PC-3 (cell line): ENCODE measurements at regions of chr4 and their contacts with region 1.

Region 1: DNA sequence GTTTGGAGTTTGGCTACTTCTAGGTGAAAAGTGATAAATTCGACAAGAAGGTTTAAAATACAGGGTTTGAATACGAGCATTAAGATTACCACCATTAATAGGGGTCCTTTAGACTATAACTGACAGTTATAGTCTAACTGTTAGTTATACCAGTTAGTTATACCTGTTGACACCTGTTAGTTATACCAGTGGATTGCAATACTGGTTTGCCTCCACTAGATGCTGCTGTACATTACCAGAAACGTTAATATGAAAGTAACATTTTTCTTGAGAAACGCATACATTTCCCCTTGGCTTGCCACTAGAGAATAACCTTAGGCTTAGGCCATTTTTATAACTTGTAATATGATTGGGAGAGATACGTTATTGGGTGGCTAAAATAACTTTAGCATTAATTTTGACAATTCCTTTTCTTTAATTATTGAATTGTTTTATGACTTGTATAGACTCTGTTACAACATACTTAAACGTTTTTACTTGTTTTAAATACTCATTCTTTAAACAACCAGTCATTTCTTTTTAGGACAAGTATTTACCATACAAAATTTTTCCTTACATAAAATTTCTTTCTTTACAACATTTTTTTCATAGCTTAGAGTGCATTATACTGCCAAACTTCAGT is 911.2 kb downstream of the FSTL5 start:
- DNase-seq: peak; percentile 60
- ATAC-seq: peak; percentile 42
- H3K4me3 ChIP-seq: no peak overlapping the region
- H3K27ac ChIP-seq: no peak overlapping the region
- H3K4me1 ChIP-seq: no peaks in the 10 kb centered on the region; the same call in 1 of the 2 replicates
- H3K27me3 ChIP-seq: no peaks in the 10 kb centered on the region
- CTCF ChIP-seq: peak; percentile 80

Region 2: DNA sequence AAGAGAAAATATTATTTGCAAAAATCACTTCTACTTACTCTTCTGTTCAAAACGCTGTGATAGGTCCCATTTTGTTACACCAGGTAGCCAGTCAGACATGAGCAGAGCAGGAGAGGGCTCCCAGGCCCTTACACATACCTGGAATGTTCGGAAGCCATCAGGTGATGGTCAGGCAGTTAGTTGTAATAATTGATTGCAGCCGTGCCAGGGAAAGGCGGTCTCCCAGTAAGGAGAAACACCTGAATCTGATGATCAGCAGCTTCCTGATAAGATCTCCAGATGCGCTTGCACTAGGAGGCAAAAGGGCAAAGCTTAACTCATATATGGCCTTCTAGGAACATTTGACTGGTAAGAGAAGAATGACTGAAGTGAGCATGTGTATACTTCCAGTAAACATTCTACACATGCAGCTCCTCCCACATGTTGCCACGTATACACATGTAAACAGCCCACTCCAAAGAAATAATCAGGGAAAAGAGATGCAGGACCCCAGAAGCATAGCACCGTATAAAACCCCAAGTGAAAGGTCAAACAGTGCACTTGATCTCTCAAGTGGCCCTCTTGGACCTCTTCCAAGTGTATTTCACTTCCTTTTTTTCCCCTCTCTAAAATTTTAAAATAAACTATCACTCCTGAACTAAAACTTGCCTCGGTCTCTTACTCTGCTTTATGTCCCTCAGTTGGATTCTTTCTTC is 426.8 kb before region 1 on chr4:
- CTCF ChIA-PET with region 1: no interaction called
- POLR2A ChIA-PET with region 1: no interaction called
- intact Hi-C with region 1: loop called (anchors 5 kb)
- DNase-seq: no peak
- ATAC-seq: no peak
- H3K4me3 ChIP-seq: no peak overlapping the region
- H3K27ac ChIP-seq: no peak overlapping the region
- H3K4me1 ChIP-seq: no peaks in the 10 kb centered on the region
- H3K27me3 ChIP-seq: no peaks in the 10 kb centered on the region
- CTCF ChIP-seq: no peak

Region 3: DNA sequence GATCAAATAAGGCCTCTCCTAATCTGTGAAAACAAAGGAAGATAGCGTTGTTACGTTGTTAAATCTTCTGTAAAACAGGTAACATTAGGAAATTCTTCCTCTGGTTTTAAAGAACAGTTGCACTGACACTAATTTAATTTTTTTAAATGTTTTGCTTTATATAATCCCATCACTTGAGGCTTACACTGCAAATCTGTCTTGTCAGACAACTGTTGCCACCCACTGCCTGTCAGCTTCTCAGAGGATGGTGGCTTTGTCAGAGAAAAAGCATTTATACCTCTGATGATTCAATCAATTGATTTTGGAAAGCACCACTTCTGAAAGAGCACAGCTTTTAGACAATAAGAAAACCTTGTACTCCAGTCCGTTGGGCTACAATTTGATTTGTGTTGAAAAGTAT is 112.0 kb after region 1 on chr4:
- CTCF ChIA-PET with region 1: no interaction called
- POLR2A ChIA-PET with region 1: no interaction called
- intact Hi-C with region 1: no loop called
- DNase-seq: no peak
- ATAC-seq: no peak
- H3K4me3 ChIP-seq: no peak overlapping the region
- H3K27ac ChIP-seq: no peak overlapping the region
- H3K4me1 ChIP-seq: no peaks in the 10 kb centered on the region
- H3K27me3 ChIP-seq: no peaks in the 10 kb centered on the region
- CTCF ChIP-seq: no peak